A549 (cell line): ENCODE measurements at regions of chr3 and their contacts with region 1.

Region 1: GRCh38 chr3:50568947-50569749 is at the start of gene HEMK1:
- DNase-seq: peak; percentile 91 to 95
- ATAC-seq: peak; percentile 78 to 87
- H3K4me3 ChIP-seq: peak within 1 kb of the TSS; percentile 98
- H3K27ac ChIP-seq: peak within 1 kb of the TSS; percentile 95 to 97
- H3K4me1 ChIP-seq: peaks cover 20% of the 10 kb centered on the region
- CTCF ChIP-seq: no peak
- EP300 ChIP-seq: no peak
- POLR2A ChIP-seq: peak; percentile 23
- RAD21 ChIP-seq: no peak
- polyA plus RNA-seq, gene HEMK1: 4.7 and 5.1 TPM in 2 replicates

Region 2: DNA sequence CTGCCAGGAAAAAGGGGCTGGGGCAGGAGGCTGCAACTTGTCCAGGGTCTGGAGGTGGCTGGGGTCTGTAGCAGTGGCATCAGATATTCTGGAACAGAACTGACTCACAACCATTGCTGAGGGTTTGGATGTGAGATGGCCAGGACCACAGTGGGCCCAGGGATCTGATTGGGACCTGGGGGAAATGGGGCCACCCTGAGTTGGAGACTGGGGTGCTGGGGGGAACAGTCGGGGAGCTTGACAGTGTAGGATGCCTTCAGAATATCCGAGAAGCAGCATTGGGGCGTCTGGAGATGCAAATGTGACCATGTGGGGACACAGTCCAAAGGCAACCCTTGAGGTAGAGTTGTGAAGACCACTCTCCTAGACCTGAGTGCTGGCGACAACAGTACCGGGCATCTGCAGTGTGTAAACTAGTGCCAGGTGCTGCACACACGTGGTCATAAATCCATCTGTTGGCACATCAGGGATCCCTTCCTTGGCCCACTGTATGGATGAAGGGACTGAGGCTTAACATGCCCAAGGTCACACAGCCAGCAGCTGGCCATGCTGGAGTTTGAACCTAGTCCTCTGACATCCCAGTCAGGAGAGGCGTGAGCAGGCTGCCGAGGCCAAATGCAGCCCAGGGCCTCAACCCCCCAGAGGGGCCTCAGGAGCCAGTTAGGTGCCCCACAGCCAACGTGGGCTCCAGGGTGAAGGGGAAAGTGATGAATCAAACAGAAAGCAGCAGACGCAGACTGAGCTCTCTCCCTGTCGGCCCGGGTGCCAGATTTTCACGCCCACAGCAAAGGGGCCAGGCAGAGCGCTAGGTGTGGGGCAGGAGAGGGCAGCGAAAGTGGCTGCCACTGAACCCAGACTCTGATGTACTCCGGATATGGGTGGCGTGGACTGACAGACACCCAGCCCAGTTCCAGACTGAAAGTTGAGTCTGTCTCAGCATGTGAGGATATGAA is 18.9 kb after region 1 on chr3:
- CTCF ChIA-PET with region 1: interaction called, 17 read pairs
- POLR2A ChIA-PET with region 1: interaction called, 7 read pairs
- DNase-seq: no peak
- ATAC-seq: no peak; a peak in 1 of 6 replicates
- H3K4me3 ChIP-seq: no peak overlapping the region
- H3K27ac ChIP-seq: no peak overlapping the region
- H3K4me1 ChIP-seq: peaks cover 14% of the 10 kb centered on the region
- CTCF ChIP-seq: no peak
- EP300 ChIP-seq: no peak
- POLR2A ChIP-seq: no peak
- RAD21 ChIP-seq: no peak

Region 3: GRCh38 chr3:50600841-50601591 is 31.9 kb after region 1 on chr3:
- CTCF ChIA-PET with region 1: interaction called, 375 read pairs
- POLR2A ChIA-PET with region 1: interaction called, 8 read pairs
- DNase-seq: peak; percentile 81 to 89
- ATAC-seq: peak; percentile 85 to 91
- H3K4me3 ChIP-seq: peak overlapping the region; percentile 30; the same call in 2 of the 3 replicates
- H3K27ac ChIP-seq: peak overlapping the region; percentile 97 to 98
- H3K4me1 ChIP-seq: peaks cover 41% of the 10 kb centered on the region
- CTCF ChIP-seq: no peak
- EP300 ChIP-seq: no peak; a peak in 1 of 5 replicates
- POLR2A ChIP-seq: no peak
- RAD21 ChIP-seq: 0 out of 5 replicates have a peak, but pooled peaks of 1 of the 2 experiments have one; percentile 14

Region 4: DNA sequence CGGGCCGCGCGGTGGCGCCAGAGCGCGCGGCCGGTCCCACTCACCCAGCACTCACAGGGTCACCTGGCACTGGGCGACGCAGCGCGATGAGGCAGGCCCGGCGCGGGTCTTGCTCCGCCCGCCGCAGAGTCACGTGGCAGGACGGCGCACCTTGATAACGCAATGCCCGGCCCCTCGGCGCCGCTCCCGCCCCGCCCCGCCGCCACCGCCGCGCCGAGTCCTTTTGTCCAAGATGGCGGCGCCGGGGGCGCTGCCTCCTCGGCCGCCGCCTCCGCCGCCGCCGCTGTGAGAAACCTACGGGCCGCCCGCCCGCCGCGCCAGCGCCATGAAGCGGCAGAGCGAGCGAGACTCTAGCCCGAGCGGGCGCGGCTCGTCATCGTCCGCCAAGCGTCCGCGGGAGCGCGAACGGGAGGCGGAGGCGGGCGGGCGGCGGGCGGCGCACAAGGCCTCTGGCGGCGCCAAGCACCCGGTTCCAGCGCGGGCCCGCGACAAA is 822.0 kb after region 1 on chr3 and contains the start of gene RBM15B:
- CTCF ChIA-PET with region 1: interaction called, 13 read pairs
- POLR2A ChIA-PET with region 1: no interaction called
- DNase-seq: peak; percentile 82 to 95
- ATAC-seq: peak; percentile 88 to 93
- H3K4me3 ChIP-seq: peak within 1 kb of the TSS; percentile 92
- H3K27ac ChIP-seq: peak within 1 kb of the TSS; percentile 94 to 99
- H3K4me1 ChIP-seq: peaks cover 38% of the 10 kb centered on the region
- CTCF ChIP-seq: peak; percentile 75
- EP300 ChIP-seq: no peak
- POLR2A ChIP-seq: peak; percentile 61; the same call in 1 of the 2 replicates
- RAD21 ChIP-seq: peak; percentile 34 to 41; a peak in 2 of 5 replicates
- polyA plus RNA-seq, gene RBM15B: 7.9 and 10.9 TPM in 2 replicates